T-cell (primary cell): ENCODE measurements at regions of chr17 and their contacts with region 1.

Region 1: DNA sequence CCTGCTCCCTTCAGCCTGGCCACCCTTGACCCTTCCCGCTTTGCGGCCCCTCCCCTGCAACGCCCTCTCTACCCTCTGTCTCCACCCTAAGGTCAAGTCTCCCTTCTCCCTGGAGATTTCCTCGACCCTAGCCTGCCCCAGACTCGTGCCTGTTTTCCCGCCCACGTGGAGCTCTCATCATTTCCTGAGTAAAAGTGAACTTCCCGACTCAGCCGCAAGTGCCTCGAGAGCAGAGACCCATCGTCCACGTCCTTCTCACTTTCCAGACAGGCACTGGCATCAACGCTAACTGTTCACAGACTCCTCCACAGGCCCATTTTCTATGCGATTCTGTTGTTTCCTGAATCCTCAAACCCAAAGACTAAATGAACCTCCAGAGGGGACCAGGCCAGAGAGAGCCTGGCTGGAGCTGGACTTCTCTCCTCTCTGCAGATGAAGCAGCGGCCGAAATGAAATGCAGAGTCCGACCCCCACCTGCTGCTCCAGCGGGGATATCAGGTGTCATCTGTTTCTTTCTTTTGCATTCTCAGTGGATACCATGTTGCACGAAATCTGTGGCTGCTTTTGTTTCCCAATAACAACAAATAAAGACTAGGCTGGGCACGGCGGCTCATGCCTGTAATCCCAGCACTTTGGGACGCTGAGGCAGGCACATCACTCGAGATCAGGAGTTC is 52.5 kb downstream of the RTN4RL1 start:
- DNase-seq: no peak
- ATAC-seq: no peak
- H3K4me3 ChIP-seq: no peak overlapping the region
- H3K4me3 Mint-ChIP-seq: peak overlapping the region in 1 of 3 donors; percentile 15
- H3K27ac ChIP-seq: no peak overlapping the region
- H3K27ac Mint-ChIP-seq: no peak overlapping the region
- H3K4me1 ChIP-seq: peaks cover 10 to 17% of the 10 kb centered on the region in 2 experiments
- H3K4me1 Mint-ChIP-seq: peaks cover 23 to 27% (median 24%) of the 10 kb centered on the region in 3 donors
- H3K27me3 ChIP-seq: peaks cover 0 to 56% of the 10 kb centered on the region in 2 experiments
- H3K27me3 Mint-ChIP-seq: peaks cover 32 to 60% of the 10 kb centered on the region in 2 donors

Region 2: DNA sequence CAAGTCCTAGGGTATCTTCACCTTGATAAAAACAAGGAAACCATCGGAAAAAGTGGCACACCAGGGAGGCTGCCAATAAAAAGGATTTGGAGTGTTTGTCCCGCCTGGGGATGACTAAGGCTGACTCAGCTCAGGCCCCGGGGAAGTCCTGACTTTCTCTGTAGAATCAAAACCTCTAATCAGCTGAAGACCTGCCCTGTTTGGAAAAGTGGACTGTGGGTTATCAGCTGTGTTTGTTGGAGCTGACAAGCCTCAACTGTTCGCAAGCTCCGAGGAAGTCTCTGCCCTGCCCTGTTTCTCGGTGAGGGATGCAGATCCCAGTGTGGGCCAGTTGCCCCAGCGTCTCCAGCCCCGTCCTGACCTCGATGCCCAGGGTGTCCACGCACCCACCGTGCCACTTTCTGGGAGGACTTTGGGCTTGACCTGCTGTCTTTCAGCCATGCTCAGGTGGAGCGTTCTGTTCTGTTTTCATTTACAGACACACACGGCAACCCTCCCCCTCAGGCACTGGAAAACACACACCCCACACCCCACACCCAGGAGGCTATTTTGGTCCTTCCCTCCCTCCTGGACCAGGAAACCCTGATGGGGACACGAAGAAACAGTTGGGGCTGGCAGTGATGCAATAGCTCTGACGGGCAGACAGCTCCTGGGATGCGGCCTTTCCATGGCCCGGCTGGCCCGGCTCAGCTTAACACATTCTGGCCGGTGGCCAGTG is 382.4 kb before region 1 on chr17:
- CTCF ChIA-PET with region 1: no interaction called
- POLR2A ChIA-PET with region 1: interaction called in 1 of 2 experiments, 16 read pairs
- DNase-seq: no peak
- ATAC-seq: no peak
- H3K4me3 ChIP-seq: no peak overlapping the region
- H3K4me3 Mint-ChIP-seq: no peak overlapping the region
- H3K27ac ChIP-seq: no peak overlapping the region
- H3K27ac Mint-ChIP-seq: no peak overlapping the region
- H3K4me1 ChIP-seq: peaks cover 0 to 5% of the 10 kb centered on the region in 2 experiments
- H3K4me1 Mint-ChIP-seq: peaks cover 0 to 5% (median 4%) of the 10 kb centered on the region in 3 donors
- H3K27me3 ChIP-seq: no peaks in the 10 kb centered on the region
- H3K27me3 Mint-ChIP-seq: no peaks in the 10 kb centered on the region